ENCODE measurements at regions of chr7 and their contacts with region 1.

Region 1: DNA sequence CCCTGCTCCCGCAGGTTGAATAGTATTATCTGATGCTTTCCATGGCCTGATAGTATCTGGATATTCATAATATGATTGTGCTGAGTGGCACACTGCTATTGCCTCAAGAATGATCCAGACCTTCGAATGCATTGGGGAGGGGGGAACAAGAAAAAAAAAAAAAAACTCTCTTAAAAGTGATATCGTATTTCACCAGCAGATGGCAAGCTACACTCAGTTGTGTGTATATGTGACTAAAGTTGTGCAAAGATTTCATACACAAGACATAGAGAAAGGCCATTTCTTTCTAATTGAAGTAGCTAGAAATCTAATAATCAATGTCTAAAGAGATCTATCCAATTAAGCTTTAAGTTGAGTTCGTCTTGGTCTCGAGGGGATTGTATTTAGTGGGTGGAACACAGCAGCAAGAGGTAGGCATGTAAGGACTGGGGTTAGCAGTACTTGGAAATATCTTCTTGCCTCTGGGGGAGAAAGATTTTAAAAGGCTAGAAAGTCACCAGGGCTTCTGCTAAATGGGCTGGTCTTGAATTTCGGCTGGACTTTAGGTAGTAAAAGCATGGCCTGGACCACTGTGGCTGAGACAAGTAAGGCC is 15.3 kb downstream of the SFRP4 start:
- DNase-seq: peak; percentile 57
- ATAC-seq: peak; percentile 34
- H3K4me3 ChIP-seq: no peak overlapping the region
- H3K27ac ChIP-seq: no peak overlapping the region
- H3K4me1 ChIP-seq: peaks cover 30% of the 10 kb centered on the region
- H3K27me3 ChIP-seq: no peaks in the 10 kb centered on the region
- CTCF ChIP-seq: peak; percentile 88

Region 2: DNA sequence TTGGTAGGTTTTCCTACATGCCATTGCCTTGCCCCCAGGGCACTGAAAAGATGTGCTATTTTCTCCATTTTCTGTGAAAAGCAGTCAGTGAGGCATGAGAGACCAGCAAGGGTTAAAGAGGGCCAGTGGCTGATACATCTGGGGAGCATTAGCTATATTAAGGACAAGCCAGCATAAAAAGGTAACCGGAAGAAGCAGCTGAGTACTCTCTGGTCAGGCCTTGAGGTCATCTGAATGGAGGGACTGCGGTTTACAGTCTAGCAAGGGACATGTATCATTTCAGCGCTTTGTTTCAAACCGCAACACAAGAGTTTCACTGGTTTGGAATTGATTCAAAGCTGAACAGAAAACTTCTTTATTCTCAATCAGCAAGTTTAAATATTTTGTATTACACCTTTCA is 139.5 kb after region 1 on chr7:
- CTCF ChIA-PET with region 1: interaction called, 3 read pairs
- POLR2A ChIA-PET with region 1: no interaction called
- intact Hi-C with region 1: loop called (anchors 1 kb)
- DNase-seq: no peak
- ATAC-seq: no peak
- H3K4me3 ChIP-seq: no peak overlapping the region
- H3K27ac ChIP-seq: no peak overlapping the region
- H3K4me1 ChIP-seq: no peaks in the 10 kb centered on the region
- H3K27me3 ChIP-seq: no peaks in the 10 kb centered on the region
- CTCF ChIP-seq: no peak

Region 3: DNA sequence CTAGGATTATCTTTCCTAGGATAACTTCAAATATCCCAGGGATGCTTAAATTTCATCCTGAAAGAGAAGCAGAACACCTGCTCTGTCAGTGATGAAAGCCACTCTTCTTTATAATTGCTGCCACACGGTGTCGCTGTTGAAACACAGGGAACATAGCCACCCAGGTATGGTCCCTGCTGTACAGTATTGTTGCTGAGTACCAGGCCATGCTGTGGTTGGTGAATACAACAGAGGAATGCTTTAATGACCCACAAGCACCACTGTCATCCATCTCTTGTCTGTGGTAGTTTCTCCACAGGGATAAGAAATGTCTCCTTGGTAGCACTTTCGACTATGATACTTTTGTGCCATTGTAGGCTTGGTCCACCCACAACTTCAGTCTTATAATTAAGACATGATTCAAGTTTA is 206.2 kb after region 1 on chr7:
- CTCF ChIA-PET with region 1: interaction called, 5 read pairs
- POLR2A ChIA-PET with region 1: no interaction called
- intact Hi-C with region 1: loop called (anchors 1 kb)
- DNase-seq: peak; percentile 80
- ATAC-seq: peak; percentile 91
- H3K4me3 ChIP-seq: no peak overlapping the region
- H3K27ac ChIP-seq: no peak overlapping the region
- H3K4me1 ChIP-seq: no peaks in the 10 kb centered on the region
- H3K27me3 ChIP-seq: peaks cover 10% of the 10 kb centered on the region
- CTCF ChIP-seq: peak; percentile 82

Region 4: GRCh38 chr7:38222481-38223096 is 321.3 kb after region 1 on chr7:
- CTCF ChIA-PET with region 1: interaction called, 4 read pairs
- POLR2A ChIA-PET with region 1: interaction called, 5 read pairs
- intact Hi-C with region 1: loop called (anchors 1 kb)
- DNase-seq: peak; percentile 79
- ATAC-seq: peak; percentile 79
- H3K4me3 ChIP-seq: no peak overlapping the region
- H3K27ac ChIP-seq: no peak overlapping the region
- H3K4me1 ChIP-seq: no peaks in the 10 kb centered on the region
- H3K27me3 ChIP-seq: no peaks in the 10 kb centered on the region
- CTCF ChIP-seq: peak; percentile 89

Region 5: DNA sequence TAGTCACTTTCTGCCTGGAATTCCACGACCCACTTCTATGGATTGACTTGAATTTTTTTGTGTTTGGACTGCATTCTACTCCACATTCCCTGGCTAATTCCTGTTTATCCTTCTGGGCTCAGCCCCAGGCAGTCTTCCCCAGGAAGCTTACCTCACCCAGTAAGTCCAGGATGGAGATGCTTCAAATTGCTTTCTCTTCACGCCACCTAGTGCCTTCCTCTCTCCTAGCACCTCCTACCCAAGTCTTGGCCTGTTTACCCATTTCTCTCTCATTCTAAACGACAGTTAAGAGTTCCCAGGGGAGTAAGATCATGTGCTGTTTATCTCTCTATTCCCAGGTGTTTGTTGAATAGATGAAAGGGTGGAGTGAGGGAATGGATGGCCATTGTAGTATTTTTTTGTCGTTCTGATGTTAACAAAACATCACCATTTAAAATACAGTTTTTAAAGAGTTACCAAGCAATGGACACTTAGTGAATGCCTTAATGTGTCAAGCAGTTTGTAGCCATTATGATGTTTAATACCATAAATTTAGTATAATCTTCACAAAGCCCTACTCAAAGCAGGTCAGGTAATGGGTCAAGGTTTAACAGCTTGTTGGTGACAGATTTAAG is 417.6 kb after region 1 on chr7:
- CTCF ChIA-PET with region 1: no interaction called
- POLR2A ChIA-PET with region 1: no interaction called
- intact Hi-C with region 1: loop called (anchors 2 kb)
- DNase-seq: peak; percentile 73
- ATAC-seq: peak; percentile 93
- H3K4me3 ChIP-seq: no peak overlapping the region
- H3K27ac ChIP-seq: no peak overlapping the region
- H3K4me1 ChIP-seq: peaks cover 12% of the 10 kb centered on the region
- H3K27me3 ChIP-seq: no peaks in the 10 kb centered on the region
- CTCF ChIP-seq: peak; percentile 72

Region 6: GRCh38 chr7:38335492-38336147 is 434.3 kb after region 1 on chr7:
- CTCF ChIA-PET with region 1: interaction called, 3 read pairs
- POLR2A ChIA-PET with region 1: no interaction called
- intact Hi-C with region 1: loop called (anchors 10 kb)
- DNase-seq: peak; percentile 81
- ATAC-seq: peak; percentile 98
- H3K4me3 ChIP-seq: no peak overlapping the region
- H3K27ac ChIP-seq: no peak overlapping the region
- H3K4me1 ChIP-seq: no peaks in the 10 kb centered on the region
- H3K27me3 ChIP-seq: no peaks in the 10 kb centered on the region
- CTCF ChIP-seq: peak; percentile 91

Measured in PC-3 (cell line).